ENCODE measurements at regions of chr1 and their contacts with region 1.

Region 1: GRCh38 chr1:86696522-86696921 is 7.9 kb upstream of the SH3GLB1 start:
- DNase-seq: no peak
- H3K4me3 ChIP-seq: no peak overlapping the region
- H3K27ac ChIP-seq: no peak overlapping the region
- H3K27me3 ChIP-seq: no peaks in the 10 kb centered on the region
- CTCF ChIP-seq: no peak

Region 2: GRCh38 chr1:86197206-86197855 is 499.2 kb before region 1 on chr1:
- intact Hi-C with region 1: no loop called
- DNase-seq: no peak
- H3K4me3 ChIP-seq: no peak overlapping the region
- H3K27ac ChIP-seq: no peak overlapping the region
- H3K27me3 ChIP-seq: peaks cover 0 to 7% (median 0%) of the 10 kb centered on the region in 45 donors
- CTCF ChIP-seq: no peak

Region 3: GRCh38 chr1:86515597-86515996 is 180.9 kb before region 1 on chr1:
- intact Hi-C with region 1: loop called (anchors 10 kb)
- DNase-seq: peak in 2 of 10 donors; percentile 59 to 67
- H3K4me3 ChIP-seq: no peak overlapping the region
- H3K27ac ChIP-seq: no peak overlapping the region
- H3K27me3 ChIP-seq: no peaks in the 10 kb centered on the region
- CTCF ChIP-seq: peak in 55 of 56 donors; percentile 31 to 96 (median 68)

Measured in dorsolateral prefrontal cortex (tissue), 120 donors.